ENCODE measurements at regions of chr6 and their contacts with region 1.

Region 1: GRCh38 chr6:137641474-137642077 is 147.4 kb upstream of the OLIG3 start:
- DNase-seq: peak; percentile 65
- ATAC-seq: peak; percentile 83
- H3K4me3 ChIP-seq: no peak overlapping the region
- H3K27ac ChIP-seq: no peak overlapping the region
- H3K4me1 ChIP-seq: no peaks in the 10 kb centered on the region
- H3K27me3 ChIP-seq: no peaks in the 10 kb centered on the region
- CTCF ChIP-seq: peak; percentile 75

Region 2: DNA sequence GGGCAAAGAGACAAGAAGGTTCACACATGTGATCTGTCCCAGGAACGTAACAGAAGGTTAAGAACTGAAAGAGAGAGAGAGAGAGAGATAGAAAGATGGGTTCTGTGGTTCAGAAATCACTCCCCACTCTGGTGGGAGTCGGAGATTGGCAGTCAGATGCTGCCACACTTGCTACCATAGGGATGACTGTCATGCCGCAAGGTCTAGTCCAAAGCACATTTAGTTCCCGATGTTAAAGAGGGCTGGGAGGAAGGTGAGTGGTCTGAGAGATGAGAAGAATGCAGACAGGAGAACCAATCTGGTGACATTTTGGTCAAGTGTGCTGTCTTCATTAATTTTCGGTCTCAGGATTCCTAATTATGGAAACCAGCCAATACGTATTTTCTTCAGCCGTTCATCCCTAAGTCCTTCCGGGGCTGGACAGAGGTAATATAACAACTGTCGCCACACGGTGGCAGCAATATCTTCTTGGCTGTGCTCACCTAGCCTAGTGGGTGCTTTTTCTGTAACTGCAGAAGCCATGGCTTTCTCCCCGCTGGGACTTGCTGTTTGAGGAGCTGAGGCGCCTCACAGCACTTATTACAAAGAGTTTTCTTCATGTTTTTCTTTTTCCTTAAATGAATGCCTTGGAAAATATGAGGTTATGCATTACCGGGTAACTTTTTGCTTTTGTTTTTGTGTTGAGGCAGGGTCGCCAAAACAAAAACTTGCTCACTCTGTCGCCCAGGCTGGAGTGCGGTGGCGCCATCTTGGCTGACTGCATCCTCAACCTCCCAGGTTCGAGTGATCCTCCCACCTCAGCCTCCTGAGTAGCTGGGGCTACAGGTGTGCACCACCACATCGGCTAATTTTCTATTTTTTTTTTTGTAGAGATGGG is 673.5 kb before region 1 on chr6:
- CTCF ChIA-PET with region 1: no interaction called
- POLR2A ChIA-PET with region 1: no interaction called
- intact Hi-C with region 1: loop called (anchors 10 kb)
- DNase-seq: peak; percentile 91
- ATAC-seq: peak; percentile 70
- H3K4me3 ChIP-seq: no peak overlapping the region
- H3K27ac ChIP-seq: peak overlapping the region; percentile 96
- H3K4me1 ChIP-seq: peaks cover 22% of the 10 kb centered on the region
- H3K27me3 ChIP-seq: no peaks in the 10 kb centered on the region
- CTCF ChIP-seq: peak; percentile 76

Region 3: DNA sequence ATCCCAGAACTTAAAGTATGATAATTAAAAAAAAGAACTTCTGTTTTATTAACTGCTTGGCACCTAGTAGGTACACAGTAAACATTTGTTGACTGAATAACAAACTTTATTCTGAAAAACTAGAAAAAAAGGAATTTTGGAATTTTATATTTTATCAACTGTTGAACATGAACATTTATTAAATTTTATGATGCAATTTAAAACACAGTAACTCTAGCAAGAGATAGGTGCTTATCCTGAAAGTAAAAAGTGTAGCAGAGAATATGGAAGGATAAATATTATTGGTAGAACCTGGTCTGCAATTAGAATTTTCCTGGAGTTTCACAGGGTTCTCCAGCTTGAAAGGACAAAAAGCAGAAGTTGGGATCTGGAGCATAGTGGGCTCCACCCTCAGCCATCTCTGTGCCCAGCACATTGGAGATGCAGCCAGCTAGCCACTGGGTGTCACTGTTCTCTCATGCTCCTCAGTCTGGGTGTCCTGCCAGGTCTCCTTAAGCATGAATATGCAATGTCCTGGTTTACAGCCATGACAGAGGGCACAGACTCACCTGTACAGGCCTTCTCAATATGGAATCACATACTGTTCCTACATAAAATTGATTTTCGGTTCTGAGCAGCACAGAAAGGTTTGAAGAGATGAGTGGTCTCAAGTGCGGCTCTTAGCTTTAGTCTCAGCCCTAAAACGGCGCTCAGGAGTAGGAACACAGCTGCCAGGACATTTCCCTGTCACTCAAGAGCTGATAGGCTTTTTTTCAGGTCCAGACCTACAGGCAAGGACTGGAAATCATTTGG is 565.1 kb before region 1 on chr6:
- CTCF ChIA-PET with region 1: no interaction called
- POLR2A ChIA-PET with region 1: no interaction called
- intact Hi-C with region 1: loop called (anchors 5 kb)
- DNase-seq: peak; percentile 80
- ATAC-seq: peak; percentile 100
- H3K4me3 ChIP-seq: no peak overlapping the region
- H3K27ac ChIP-seq: no peak overlapping the region
- H3K4me1 ChIP-seq: no peaks in the 10 kb centered on the region
- H3K27me3 ChIP-seq: no peaks in the 10 kb centered on the region
- CTCF ChIP-seq: peak; percentile 79

Region 4: DNA sequence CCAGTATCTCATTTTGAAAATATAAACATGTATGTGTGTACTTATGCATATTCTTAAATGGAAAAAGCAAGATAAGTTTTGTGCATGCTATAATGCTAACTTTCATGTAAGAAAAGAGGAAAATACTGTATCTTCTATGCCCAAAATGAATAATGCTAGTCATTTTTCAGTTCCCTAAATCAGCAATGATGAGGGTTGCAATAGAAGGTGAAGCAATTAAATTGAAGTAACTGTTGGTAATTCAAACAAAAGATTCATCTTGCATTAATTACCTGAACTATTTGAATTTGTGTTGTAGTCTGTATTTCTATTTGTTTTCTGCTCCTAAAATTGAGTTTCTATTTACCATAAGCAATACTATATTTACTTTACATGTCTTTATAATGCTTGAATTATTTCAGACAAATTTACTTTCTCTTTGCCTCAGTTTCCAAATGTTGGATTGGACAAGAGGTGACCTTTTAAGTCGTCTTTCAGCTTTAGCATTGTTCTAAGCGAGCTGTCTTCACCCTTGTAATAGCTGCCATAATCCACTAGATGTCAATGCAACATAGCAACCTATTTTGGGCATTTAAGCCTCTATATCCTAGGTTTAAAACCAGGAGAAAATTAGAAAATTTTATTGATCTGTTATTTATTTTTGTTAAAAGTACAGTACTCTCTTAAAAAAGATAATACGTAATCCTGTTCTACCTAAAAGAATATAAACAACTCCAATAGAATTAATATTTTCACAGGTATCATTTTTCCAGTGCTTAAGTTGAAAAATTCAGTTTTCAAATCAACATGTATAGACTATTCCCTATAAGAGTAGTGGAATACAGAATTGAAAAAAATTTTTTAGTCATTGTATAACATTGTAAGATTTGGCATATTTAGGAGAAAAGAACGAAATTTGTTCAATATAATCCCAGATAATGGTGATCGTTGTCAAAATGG is 370.1 kb before region 1 on chr6:
- CTCF ChIA-PET with region 1: no interaction called
- POLR2A ChIA-PET with region 1: no interaction called
- intact Hi-C with region 1: loop called (anchors 5 kb)
- DNase-seq: peak; percentile 67
- ATAC-seq: 0 out of 2 replicates have a peak, but pooled peaks have one; percentile 43
- H3K4me3 ChIP-seq: no peak overlapping the region
- H3K27ac ChIP-seq: no peak overlapping the region
- H3K4me1 ChIP-seq: no peaks in the 10 kb centered on the region
- H3K27me3 ChIP-seq: no peaks in the 10 kb centered on the region
- CTCF ChIP-seq: peak; percentile 84

Region 5: DNA sequence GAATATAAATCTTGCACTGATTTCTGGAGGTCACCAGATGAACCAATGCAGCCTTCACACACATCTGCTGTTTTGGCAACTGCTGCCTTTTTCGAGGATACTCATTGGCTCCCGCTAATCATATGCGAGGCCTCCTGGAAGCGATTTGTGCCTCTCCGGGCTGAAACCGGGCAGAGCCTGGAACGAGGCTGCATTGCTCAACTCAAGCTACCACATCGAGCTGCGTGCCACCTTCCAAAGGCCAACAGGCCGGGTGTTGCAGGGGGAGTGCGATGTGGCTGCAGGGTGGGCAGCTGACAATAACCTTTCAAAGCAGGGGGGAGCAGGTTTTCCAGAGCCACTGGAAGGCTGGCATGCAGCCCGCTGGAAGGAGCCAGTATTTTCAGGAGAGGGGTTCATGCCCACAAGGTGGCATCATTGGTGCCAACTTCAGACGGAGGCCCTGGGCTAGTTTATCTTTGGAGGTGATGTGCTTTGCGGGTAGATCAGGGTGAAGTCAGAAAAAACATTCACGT is 299.8 kb before region 1 on chr6:
- CTCF ChIA-PET with region 1: no interaction called
- POLR2A ChIA-PET with region 1: no interaction called
- intact Hi-C with region 1: loop called (anchors 1 kb)
- DNase-seq: peak; percentile 59
- ATAC-seq: peak; percentile 58
- H3K4me3 ChIP-seq: peak overlapping the region; percentile 62; the same call in 1 of the 2 replicates
- H3K27ac ChIP-seq: no peak overlapping the region
- H3K4me1 ChIP-seq: no peaks in the 10 kb centered on the region
- H3K27me3 ChIP-seq: peaks cover 40% of the 10 kb centered on the region
- CTCF ChIP-seq: peak; percentile 62

Region 6: GRCh38 chr6:137799950-137800568 is 158.5 kb after region 1 on chr6:
- CTCF ChIA-PET with region 1: no interaction called
- POLR2A ChIA-PET with region 1: no interaction called
- intact Hi-C with region 1: no loop called
- DNase-seq: peak; percentile 63
- ATAC-seq: peak; percentile 60; the same call in 1 of the 2 replicates
- H3K4me3 ChIP-seq: no peak overlapping the region
- H3K27ac ChIP-seq: no peak overlapping the region
- H3K4me1 ChIP-seq: no peaks in the 10 kb centered on the region
- H3K27me3 ChIP-seq: no peaks in the 10 kb centered on the region
- CTCF ChIP-seq: peak; percentile 67